ENCODE measurements at regions of chr10 and their contacts with region 1.

Region 1: DNA sequence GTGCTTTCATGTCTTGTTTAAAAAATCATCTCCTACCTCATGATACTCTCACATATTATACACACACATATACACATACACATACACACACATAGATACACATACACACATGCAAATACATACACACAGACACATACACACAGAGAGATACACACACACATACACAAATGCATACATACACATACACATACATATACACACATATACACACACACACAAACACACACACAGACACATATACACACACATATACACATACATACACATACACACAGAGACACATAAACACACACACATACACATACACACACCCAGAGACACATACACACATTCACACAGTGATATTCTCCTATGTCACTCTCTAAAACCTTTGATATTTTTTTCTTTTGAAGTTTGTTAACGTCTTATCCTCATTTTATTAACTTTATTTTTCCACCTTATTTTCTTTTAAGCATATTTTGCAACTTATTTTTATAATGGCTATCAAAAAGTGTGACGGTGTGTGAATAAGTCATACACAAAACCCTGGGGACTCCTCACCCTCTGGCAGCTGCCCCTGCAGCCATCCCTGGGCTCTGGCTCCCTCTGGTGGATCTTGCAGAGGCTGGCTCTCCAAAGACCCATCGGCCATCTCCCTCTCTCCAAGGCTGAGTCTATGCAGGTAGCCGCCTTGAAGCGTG is 3.9 kb upstream of the C10orf120 start:
- DNase-seq: peak; percentile 67 to 91 (median 84)
- ATAC-seq: peak; percentile 79 to 93 (median 88)
- H3K4me3 ChIP-seq: no peak overlapping the region
- H3K27ac ChIP-seq: peak overlapping the region in 2 of 4 donors; percentile 32 to 67
- H3K4me1 ChIP-seq: peaks cover 16 to 33% (median 31%) of the 10 kb centered on the region in 3 donors
- H3K27me3 ChIP-seq: no peaks in the 10 kb centered on the region
- CTCF ChIP-seq: peak; percentile 73 to 80 (median 77)

Region 2: DNA sequence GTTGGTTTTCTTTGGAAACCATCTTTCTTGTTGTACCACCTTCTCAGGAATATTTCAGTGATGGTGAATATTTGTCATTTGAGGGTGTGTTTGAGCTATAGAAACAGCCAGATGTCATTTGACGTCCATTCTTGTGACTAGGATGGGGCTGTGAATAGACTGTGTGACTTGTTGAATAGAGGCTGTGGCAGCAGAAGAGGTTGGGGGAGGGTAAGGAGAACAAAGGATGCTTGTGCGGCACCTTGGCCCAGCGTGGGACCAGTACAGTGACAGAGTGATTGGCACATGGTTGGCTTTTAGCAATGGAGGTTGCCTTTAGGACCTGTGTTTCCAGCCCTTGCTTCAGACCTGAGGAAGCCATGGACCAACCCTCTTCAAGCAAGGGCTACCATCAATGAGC is 131.7 kb before region 1 on chr10:
- intact Hi-C with region 1: loop called in 1 of 3 experiments (anchors 10 kb)
- DNase-seq: no peak
- ATAC-seq: no peak
- H3K4me3 ChIP-seq: no peak overlapping the region
- H3K27ac ChIP-seq: no peak overlapping the region
- H3K4me1 ChIP-seq: no peaks in the 10 kb centered on the region
- H3K27me3 ChIP-seq: no peaks in the 10 kb centered on the region
- CTCF ChIP-seq: no peak

Region 3: DNA sequence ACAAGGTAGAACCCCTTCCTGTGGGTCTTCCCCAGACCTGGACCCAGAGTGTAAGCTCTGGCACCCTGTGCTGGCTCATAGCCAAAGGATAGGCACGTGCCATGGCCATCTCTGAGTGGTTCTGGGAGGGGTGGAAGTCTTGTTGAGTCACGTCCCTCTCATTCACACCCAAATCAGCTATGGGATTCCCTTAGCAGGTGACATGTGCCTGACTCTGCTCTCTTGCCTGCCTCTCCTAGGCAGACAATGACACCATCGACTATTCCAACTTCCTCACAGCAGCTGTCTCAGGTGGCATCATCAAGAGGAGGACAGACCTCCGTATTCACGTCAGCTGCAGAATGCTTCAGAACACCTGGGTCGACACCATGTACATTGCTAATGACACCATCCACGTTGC is 63.8 kb before region 1 on chr10:
- intact Hi-C with region 1: loop called in 1 of 3 experiments (anchors 5 kb)
- DNase-seq: no peak
- ATAC-seq: no peak
- H3K4me3 ChIP-seq: no peak overlapping the region
- H3K27ac ChIP-seq: no peak overlapping the region
- H3K4me1 ChIP-seq: peaks cover 6 to 15% (median 14%) of the 10 kb centered on the region in 3 donors
- H3K27me3 ChIP-seq: no peaks in the 10 kb centered on the region
- CTCF ChIP-seq: no peak

Region 4: DNA sequence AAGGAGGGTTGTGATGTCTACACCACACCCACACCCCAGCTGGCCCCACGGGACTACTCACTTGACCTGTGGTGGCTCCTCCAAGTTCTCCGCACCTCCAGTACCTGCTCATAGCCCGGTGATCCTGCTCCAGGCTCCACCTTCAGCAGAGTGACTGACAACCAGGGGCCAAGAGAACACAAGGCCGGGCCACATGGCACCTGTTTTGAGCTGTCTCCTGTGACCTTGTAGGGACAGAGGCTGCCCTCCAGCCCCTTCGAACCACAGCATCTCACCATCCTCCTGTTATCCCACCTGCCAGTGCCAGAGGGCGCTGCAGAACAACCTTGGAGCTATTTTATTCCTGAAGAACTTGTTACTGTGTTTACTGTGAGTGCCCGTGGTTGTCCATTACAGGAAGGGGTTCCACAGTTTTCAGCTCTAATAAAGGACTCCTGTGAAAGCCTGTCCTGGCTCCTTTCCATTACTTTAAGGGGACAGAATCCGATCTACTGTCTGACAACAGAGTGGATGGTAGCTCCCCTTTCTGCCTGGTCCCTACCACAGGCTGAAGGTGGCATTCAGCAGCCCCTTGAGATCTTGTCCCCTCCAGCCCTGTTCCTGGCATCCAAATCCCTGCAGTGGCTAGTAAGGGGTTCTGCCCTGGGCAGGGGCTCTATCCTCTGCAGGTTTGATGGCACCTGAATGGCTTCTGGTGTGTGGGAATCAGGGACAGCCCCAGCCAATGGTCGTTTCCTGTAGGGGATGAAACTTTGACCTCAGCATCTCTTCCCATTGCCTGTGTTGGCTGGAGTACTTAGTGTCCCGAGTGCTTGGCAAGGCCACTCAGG is 54.8 kb before region 1 on chr10:
- intact Hi-C with region 1: loop called in 2 of 3 experiments (anchors 5 kb)
- DNase-seq: peak; percentile 45 to 81 (median 76)
- ATAC-seq: peak; percentile 84 to 97 (median 92)
- H3K4me3 ChIP-seq: no peak overlapping the region
- H3K27ac ChIP-seq: no peak overlapping the region
- H3K4me1 ChIP-seq: peaks cover 0 to 6% (median 0%) of the 10 kb centered on the region in 3 donors
- H3K27me3 ChIP-seq: no peaks in the 10 kb centered on the region
- CTCF ChIP-seq: peak; percentile 71 to 82 (median 78)

Region 5: DNA sequence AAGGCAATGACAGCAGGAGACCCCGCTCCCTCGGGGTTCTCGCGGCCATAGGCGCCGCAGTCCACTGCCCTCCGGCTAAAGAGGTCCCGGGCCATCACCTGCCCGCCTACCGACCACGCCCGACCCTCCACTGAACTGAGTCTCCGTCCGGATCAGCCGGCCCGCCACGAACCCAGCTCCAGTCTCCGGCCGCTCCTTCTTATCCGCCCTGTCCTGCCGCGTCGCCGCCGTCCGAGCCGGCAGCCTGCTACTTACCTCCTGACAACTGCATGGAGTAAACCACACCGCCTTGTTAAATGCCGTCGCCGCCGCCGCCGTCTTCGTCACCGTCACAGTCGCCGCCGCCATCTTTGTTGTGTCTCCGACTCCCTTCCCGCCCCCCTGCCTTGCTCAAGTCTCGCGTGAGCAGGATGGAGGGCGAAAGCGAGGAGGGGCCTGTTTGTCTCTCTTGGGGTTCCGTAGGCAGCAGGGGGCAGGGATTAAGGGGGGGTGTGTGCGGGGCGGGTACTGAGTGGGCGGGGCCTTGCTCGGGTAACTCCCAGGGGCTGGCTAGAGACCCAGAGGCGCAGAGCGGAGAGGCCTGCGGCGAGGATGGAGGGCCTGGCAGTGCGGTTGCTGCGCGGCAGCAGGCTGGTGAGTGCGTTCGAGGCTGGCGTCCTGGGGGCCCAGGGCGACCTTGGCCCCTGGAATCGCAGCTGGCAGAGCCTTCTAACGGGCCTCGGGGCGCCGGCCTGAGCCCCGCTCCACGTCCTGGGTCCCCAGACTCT is 305.0 kb after region 1 on chr10 and contains the starts of genes ACADSB and IKZF5:
- intact Hi-C with region 1: no loop called
- DNase-seq: peak; percentile 95 to 98 (median 97)
- ATAC-seq: peak; percentile 94 to 97 (median 96)
- H3K4me3 ChIP-seq: peak within 1 kb of the TSS; percentile 95 to 97 (median 96)
- H3K27ac ChIP-seq: peak within 1 kb of the TSS; percentile 83 to 93 (median 89)
- H3K4me1 ChIP-seq: peaks cover 0 to 27% (median 18%) of the 10 kb centered on the region in 3 donors
- H3K27me3 ChIP-seq: no peaks in the 10 kb centered on the region
- CTCF ChIP-seq: no peak
- total RNA-seq, gene ACADSB: 10.1 to 18.2 (median 13.3) TPM
- total RNA-seq, gene IKZF5: 7.4 to 13.1 (median 10.5) TPM

Measured in pancreas (tissue), 10 donors.